A549 (cell line): ENCODE measurements at regions of chr11 and their contacts with region 1.

Region 1: GRCh38 chr11:17978553-17979287 is 34.1 kb downstream of the SERGEF start:
- DNase-seq: peak; percentile 55 to 72
- ATAC-seq: peak; percentile 98
- H3K4me3 ChIP-seq: no peak overlapping the region
- H3K27ac ChIP-seq: no peak overlapping the region
- H3K4me1 ChIP-seq: no peaks in the 10 kb centered on the region
- CTCF ChIP-seq: peak; percentile 76
- EP300 ChIP-seq: no peak
- POLR2A ChIP-seq: no peak
- RAD21 ChIP-seq: peak; percentile 67

Region 2: DNA sequence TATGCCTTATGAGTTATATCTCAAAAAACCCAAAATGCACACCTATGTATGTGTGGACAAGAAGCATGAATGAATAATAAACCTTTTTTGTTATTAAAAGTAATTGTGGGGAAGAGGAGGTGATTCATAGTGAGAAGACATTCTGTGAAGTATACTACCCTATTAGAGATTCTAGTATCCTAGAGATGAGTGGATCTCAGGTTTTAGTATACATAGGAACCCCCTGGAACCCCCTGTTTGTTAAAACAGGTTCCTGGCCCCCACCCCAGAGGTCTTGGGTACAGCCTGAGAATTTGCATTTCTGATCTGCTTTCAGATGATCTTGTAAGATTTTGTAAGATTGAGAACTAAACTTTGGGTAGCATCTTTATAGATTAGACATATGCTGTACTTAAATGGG is 684.7 kb before region 1 on chr11:
- CTCF ChIA-PET with region 1: no interaction called
- POLR2A ChIA-PET with region 1: no interaction called
- DNase-seq: no peak
- ATAC-seq: no peak
- H3K4me3 ChIP-seq: no peak overlapping the region
- H3K27ac ChIP-seq: no peak overlapping the region
- H3K4me1 ChIP-seq: no peaks in the 10 kb centered on the region; the same call in 1 of the 3 replicates
- CTCF ChIP-seq: no peak
- EP300 ChIP-seq: no peak
- POLR2A ChIP-seq: no peak
- RAD21 ChIP-seq: no peak

Region 3: DNA sequence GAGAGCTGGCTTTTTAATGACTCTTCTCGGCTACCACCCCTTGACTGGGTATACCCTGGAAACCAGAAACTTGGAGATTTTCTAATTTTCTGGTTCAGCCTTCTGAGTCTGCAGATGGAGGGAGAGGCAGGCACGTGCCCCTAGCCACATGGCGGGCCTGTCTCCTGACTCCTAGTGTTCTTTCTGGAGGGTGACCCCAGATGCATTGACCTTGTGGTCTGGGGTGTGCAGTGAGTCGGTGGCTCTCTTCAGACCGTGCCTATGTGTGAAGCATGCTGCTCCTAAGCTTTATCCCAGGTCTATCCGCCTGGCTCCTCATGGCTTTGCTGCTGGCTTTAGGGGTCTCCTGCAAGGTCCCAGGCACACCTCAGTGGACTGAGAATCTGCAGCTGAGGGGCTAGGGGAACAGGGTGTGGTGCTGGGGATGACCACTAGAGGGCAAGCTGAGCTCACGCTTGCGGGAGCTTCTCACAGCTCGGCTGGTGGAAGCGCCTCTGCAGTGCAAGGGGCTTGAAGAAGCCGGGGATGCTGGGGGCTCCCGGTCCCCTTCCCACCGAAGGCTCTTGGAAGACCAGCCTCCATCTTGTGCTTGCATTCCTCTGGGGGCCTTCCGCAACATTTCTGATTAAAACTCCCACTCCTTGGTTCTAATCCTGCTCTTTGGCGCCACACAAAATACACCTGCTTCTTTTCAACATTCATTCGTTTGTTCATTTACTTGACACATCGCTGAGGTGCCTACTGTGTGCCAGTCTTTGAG is 379.8 kb before region 1 on chr11:
- CTCF ChIA-PET with region 1: interaction called, 45 read pairs
- POLR2A ChIA-PET with region 1: no interaction called
- DNase-seq: peak; percentile 59 to 62
- ATAC-seq: peak; percentile 85 to 96
- H3K4me3 ChIP-seq: no peak overlapping the region
- H3K27ac ChIP-seq: no peak overlapping the region
- H3K4me1 ChIP-seq: no peaks in the 10 kb centered on the region
- CTCF ChIP-seq: peak; percentile 86
- EP300 ChIP-seq: no peak
- POLR2A ChIP-seq: no peak
- RAD21 ChIP-seq: peak; percentile 88 to 94

Region 4: GRCh38 chr11:17730608-17731462 is 247.9 kb before region 1 on chr11:
- CTCF ChIA-PET with region 1: interaction called, 403 read pairs
- POLR2A ChIA-PET with region 1: interaction called, 6 read pairs
- DNase-seq: peak; percentile 79 to 91
- ATAC-seq: peak; percentile 82 to 93
- H3K4me3 ChIP-seq: no peak overlapping the region
- H3K27ac ChIP-seq: no peak overlapping the region
- H3K4me1 ChIP-seq: no peaks in the 10 kb centered on the region; the same call in 2 of the 3 replicates
- CTCF ChIP-seq: peak; percentile 77
- EP300 ChIP-seq: no peak
- POLR2A ChIP-seq: no peak
- RAD21 ChIP-seq: peak; percentile 84 to 93

Region 5: GRCh38 chr11:17743808-17744119 is 235.0 kb before region 1 on chr11:
- CTCF ChIA-PET with region 1: interaction called, 19 read pairs
- POLR2A ChIA-PET with region 1: no interaction called
- DNase-seq: no peak
- ATAC-seq: peak in 1 of 2 experiments; percentile 8; a peak in 2 of 6 replicates
- H3K4me3 ChIP-seq: no peak overlapping the region
- H3K27ac ChIP-seq: no peak overlapping the region
- H3K4me1 ChIP-seq: no peaks in the 10 kb centered on the region
- CTCF ChIP-seq: no peak
- EP300 ChIP-seq: no peak
- POLR2A ChIP-seq: no peak
- RAD21 ChIP-seq: no peak

Region 6: DNA sequence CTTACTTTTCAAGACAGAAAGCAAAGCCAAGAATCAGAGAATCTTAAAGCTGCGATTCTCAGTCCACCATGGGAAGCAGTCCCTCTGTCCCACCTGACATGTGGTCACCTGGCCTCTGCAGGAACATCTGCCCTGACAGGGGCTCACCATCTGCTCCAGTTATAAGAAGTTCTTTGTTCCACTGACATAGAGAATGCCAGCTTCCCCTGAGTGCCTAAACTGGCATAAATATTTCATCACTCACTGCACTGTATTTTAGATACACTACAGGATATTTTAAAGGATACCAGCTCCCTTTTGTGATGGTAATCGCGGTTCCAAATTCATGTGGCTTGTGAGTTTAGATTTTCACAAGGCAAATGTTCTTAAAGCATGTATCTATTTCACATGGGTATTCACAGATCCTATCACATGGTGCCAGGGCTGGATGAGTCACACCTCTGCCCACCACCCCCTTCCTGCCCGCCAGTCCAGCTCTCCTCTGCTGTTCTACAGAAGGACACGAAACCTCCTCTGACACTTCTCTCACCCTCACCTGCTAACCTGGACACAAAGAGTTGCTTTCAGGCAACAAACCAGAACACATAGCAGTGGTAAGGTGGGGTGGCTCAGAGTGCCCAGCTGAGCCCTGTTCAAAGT is 138.6 kb before region 1 on chr11:
- CTCF ChIA-PET with region 1: interaction called, 13 read pairs
- POLR2A ChIA-PET with region 1: no interaction called
- DNase-seq: no peak
- ATAC-seq: no peak
- H3K4me3 ChIP-seq: no peak overlapping the region
- H3K27ac ChIP-seq: no peak overlapping the region
- H3K4me1 ChIP-seq: no peaks in the 10 kb centered on the region
- CTCF ChIP-seq: no peak
- EP300 ChIP-seq: no peak
- POLR2A ChIP-seq: no peak
- RAD21 ChIP-seq: no peak

Region 7: GRCh38 chr11:17960091-17960490 is 18.6 kb before region 1 on chr11:
- CTCF ChIA-PET with region 1: interaction called, 69 read pairs
- POLR2A ChIA-PET with region 1: no interaction called
- DNase-seq: no peak
- ATAC-seq: no peak
- H3K4me3 ChIP-seq: no peak overlapping the region
- H3K27ac ChIP-seq: no peak overlapping the region
- H3K4me1 ChIP-seq: no peaks in the 10 kb centered on the region
- CTCF ChIP-seq: no peak
- EP300 ChIP-seq: no peak
- POLR2A ChIP-seq: no peak
- RAD21 ChIP-seq: no peak

Region 8: DNA sequence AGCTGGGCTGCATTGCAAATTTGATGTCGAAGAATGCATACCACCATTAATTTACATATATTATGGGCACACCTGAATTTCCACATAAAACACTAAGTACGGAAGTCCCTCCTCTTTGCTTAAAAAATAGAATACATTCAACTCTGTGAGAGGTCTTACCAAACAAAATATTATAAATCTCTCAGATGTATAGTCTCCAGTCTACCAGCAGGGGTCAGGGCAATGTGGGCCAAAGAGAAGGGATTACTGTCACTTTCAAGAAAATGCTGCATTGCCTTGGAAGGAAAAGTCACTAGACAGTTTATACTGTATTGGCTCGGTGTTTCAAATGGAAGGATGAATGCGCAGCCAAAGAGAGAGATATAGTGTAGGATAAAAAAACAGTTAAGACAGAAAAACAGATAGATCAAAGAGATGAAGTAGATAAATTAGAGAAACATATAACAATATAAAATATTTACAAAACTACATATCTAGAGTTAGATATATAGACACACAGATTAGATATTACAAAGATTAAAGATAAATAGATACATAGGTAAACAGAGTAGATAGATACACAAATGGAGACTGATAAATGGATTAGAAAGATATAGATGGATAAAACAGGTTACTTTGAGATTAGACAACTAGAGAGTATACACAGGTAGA is 13.2 kb after region 1 on chr11:
- CTCF ChIA-PET with region 1: interaction called, 40 read pairs
- POLR2A ChIA-PET with region 1: no interaction called
- DNase-seq: peak; percentile 65 to 70
- ATAC-seq: peak; percentile 62 to 88; a peak in 4 of 6 replicates
- H3K4me3 ChIP-seq: no peak overlapping the region
- H3K27ac ChIP-seq: no peak overlapping the region
- H3K4me1 ChIP-seq: no peaks in the 10 kb centered on the region
- CTCF ChIP-seq: peak; percentile 82
- EP300 ChIP-seq: no peak
- POLR2A ChIP-seq: no peak
- RAD21 ChIP-seq: peak; percentile 58 to 63